Activated CD8-positive, alpha-beta memory T cell treated with anti-CD3 and anti-CD28 coated beads, Interleukin-2, amount 10 ng/mL, durations not matched to agents 7 days and 5 days (primary cell): ENCODE measurements at regions of chr1 and their contacts with region 1.

Region 1: DNA sequence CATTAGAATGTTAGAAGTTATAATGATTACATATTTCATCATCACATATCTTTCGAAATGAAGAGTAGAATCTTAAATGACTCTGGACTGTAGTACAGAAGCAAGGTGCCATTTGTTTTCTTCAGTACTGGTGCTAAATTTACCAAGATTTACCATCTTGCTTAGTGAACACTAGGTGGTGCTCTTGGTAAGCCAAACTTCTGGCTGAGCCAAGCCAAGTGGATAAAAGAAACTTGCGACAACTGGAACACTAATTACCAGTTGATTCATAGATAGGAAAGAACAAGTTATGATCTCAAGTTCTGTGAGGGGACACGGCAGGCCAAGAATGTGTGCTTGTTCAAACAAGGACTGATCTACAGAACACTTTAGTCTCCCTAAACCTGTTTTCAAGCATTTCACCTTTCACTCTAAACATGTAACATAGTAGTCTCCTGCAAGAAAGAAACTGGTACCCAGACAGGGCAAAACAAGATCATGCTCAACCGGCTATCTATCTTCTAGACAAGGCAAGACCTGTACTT is 19.8 kb downstream of the SPRTN start:
- DNase-seq: peak; percentile 47
- ATAC-seq: peak; percentile 87
- H3K4me3 Mint-ChIP-seq: no peak overlapping the region
- H3K27ac Mint-ChIP-seq: peak overlapping the region; percentile 69
- H3K4me1 Mint-ChIP-seq: peaks cover 12% of the 10 kb centered on the region
- H3K27me3 Mint-ChIP-seq: no peaks in the 10 kb centered on the region

Region 2: GRCh38 chr1:231590453-231591198 is 232.7 kb after region 1 on chr1:
- CTCF ChIA-PET with region 1: interaction called, 10 read pairs
- DNase-seq: peak; percentile 55
- ATAC-seq: peak; percentile 80
- H3K4me3 Mint-ChIP-seq: no peak overlapping the region
- H3K27ac Mint-ChIP-seq: no peak overlapping the region
- H3K4me1 Mint-ChIP-seq: peaks cover 7% of the 10 kb centered on the region
- H3K27me3 Mint-ChIP-seq: no peaks in the 10 kb centered on the region